IMR-90 (cell line): ENCODE measurements at regions of chrX and their contacts with region 1.

Region 1: DNA sequence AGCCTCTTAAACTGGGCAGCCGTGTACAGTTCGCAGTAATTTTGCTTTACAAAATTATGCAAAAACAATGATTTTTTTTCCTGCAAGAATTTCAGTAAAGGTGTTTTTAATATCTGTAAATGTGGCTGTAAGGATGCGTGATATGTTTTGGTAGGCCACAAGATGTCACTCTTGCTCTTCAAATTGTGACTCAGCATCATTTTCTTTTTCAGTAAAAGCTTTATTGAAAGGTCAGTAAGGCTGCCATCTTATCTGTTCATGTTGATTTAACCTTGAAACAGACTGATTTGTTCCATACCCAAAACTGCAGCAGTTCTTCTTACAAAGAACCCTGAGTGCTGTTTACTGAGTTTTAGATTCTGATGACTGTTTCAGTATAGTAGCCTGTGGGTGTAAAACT is 39.9 kb downstream of the TXLNG start:
- DNase-seq: peak; percentile 74
- ATAC-seq: peak; percentile 69; the same call in 1 of the 2 replicates
- H3K4me3 ChIP-seq: no peak overlapping the region
- H3K27ac ChIP-seq: no peak overlapping the region
- H3K4me1 ChIP-seq: peaks cover 11% of the 10 kb centered on the region
- H3K27me3 ChIP-seq: no peaks in the 10 kb centered on the region; the same call in 1 of the 2 replicates
- CTCF ChIP-seq: peak; percentile 76
- POLR2A ChIP-seq: no peak
- RAD21 ChIP-seq: peak; percentile 80

Region 2: GRCh38 chrX:16594490-16594889 is 231.7 kb before region 1 on chrX:
- CTCF ChIA-PET with region 1: no interaction called
- POLR2A ChIA-PET with region 1: no interaction called
- dilution Hi-C with region 1: no loop called
- in situ Hi-C with region 1: no loop called
- intact Hi-C with region 1: no loop called
- DNase-seq: no peak
- ATAC-seq: no peak
- H3K4me3 ChIP-seq: no peak overlapping the region
- H3K27ac ChIP-seq: no peak overlapping the region
- H3K4me1 ChIP-seq: peaks cover 2% of the 10 kb centered on the region; the same call in 1 of the 2 replicates
- H3K27me3 ChIP-seq: no peaks in the 10 kb centered on the region; the same call in 1 of the 2 replicates
- CTCF ChIP-seq: no peak
- POLR2A ChIP-seq: no peak
- RAD21 ChIP-seq: no peak

Region 3: GRCh38 chrX:16664074-16664473 is 162.1 kb before region 1 on chrX:
- CTCF ChIA-PET with region 1: no interaction called
- POLR2A ChIA-PET with region 1: no interaction called
- dilution Hi-C with region 1: no loop called
- in situ Hi-C with region 1: no loop called
- intact Hi-C with region 1: no loop called
- DNase-seq: peak; percentile 67
- ATAC-seq: peak; percentile 56
- H3K4me3 ChIP-seq: no peak overlapping the region
- H3K27ac ChIP-seq: no peak overlapping the region
- H3K4me1 ChIP-seq: peaks cover 11% of the 10 kb centered on the region
- H3K27me3 ChIP-seq: no peaks in the 10 kb centered on the region; the same call in 1 of the 2 replicates
- CTCF ChIP-seq: peak; percentile 57
- POLR2A ChIP-seq: no peak
- RAD21 ChIP-seq: peak; percentile 61

Region 4: DNA sequence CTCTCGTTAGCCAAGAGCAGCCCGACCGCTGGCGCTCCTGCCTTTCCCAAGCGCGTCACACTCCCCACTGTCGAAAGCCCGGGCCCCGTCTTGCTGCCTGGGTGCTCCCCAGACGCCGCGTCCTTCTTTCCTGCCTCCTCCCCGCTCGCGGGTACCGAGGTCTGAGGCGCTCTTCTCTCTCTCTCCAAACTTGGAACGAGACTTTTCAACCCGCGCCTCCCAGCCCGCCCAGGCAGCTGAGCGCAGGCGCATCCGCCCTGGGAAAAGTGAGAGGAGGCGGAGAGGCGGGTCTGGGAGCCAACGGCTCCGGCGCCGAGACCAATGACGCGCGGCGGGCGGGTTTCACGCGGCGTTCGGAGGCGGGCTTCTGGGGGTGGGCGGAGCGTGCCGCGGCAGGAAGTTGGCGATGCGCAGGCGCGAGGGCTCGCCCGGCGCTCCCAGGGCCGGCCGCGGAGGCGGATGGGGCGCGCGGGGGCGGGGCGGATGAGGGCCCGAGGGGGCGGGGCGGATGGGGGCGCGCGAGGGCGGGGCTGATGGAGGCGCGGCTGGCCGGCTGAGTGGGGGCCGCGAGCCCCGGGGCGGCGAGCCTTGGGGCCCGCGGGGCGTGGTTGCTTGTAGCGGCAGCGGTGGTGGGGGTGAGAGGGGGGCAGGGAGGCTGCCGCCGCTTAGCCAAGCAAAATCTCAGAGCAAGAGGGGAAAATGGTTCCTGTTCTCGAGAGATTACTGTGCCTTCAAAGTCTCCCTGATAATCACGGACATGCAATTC is 44.1 kb after region 1 on chrX and contains the start of gene RBBP7:
- CTCF ChIA-PET with region 1: interaction called, 3 read pairs
- POLR2A ChIA-PET with region 1: no interaction called
- dilution Hi-C with region 1: no loop called
- in situ Hi-C with region 1: no loop called
- intact Hi-C with region 1: loop called (anchors 5 kb)
- DNase-seq: peak; percentile 89
- ATAC-seq: peak; percentile 91
- H3K4me3 ChIP-seq: peak within 1 kb of the TSS; percentile 66
- H3K27ac ChIP-seq: peak within 1 kb of the TSS; percentile 92
- H3K4me1 ChIP-seq: peaks cover 8% of the 10 kb centered on the region
- H3K27me3 ChIP-seq: peaks cover 9% of the 10 kb centered on the region
- CTCF ChIP-seq: no peak
- POLR2A ChIP-seq: peak; percentile 94
- RAD21 ChIP-seq: no peak
- total RNA-seq, gene RBBP7: 132 and 147 TPM in 2 replicates

Region 5: DNA sequence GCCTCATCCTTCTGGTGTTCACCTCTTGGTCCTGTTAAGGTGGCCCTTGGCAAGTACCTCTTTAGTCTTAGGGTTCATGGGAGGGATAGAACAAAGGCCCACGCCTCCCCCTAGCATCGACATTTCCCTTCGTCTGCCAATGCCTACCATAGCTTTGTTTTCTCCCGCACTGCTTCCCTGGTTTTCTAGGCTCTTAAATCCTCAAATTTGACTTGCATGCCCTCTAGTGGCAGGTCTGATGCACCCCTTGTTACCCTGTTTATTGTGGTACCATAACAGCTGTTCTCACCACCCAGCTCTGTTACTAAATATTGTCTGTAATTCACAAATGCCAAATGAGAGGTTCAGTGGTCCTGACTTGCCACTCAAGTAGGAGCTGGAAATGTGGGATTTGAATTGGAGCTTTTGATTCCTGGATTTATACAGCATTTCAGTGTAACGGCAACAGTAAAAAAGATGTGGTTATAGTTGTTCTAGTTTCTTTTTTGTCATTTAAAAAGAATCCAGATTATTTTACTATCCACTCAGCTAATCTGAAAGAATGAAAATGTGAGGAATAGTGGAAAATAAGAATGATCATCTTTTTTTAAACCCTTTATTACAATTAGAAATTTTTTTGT is 220.4 kb after region 1 on chrX:
- CTCF ChIA-PET with region 1: interaction called, 18 read pairs
- POLR2A ChIA-PET with region 1: no interaction called
- dilution Hi-C with region 1: no loop called
- in situ Hi-C with region 1: loop called (anchors 10 kb)
- intact Hi-C with region 1: loop called (anchors 1 kb)
- DNase-seq: peak; percentile 67
- ATAC-seq: peak; percentile 93
- H3K4me3 ChIP-seq: no peak overlapping the region
- H3K27ac ChIP-seq: no peak overlapping the region
- H3K4me1 ChIP-seq: no peaks in the 10 kb centered on the region
- H3K27me3 ChIP-seq: peaks cover 3% of the 10 kb centered on the region
- CTCF ChIP-seq: peak; percentile 72
- POLR2A ChIP-seq: no peak
- RAD21 ChIP-seq: peak; percentile 80

Region 6: GRCh38 chrX:17237146-17237545 is 410.9 kb after region 1 on chrX:
- CTCF ChIA-PET with region 1: no interaction called
- POLR2A ChIA-PET with region 1: no interaction called
- dilution Hi-C with region 1: no loop called
- in situ Hi-C with region 1: no loop called
- intact Hi-C with region 1: loop called (anchors 5 kb)
- DNase-seq: no peak
- ATAC-seq: no peak
- H3K4me3 ChIP-seq: no peak overlapping the region
- H3K27ac ChIP-seq: no peak overlapping the region
- H3K4me1 ChIP-seq: no peaks in the 10 kb centered on the region
- H3K27me3 ChIP-seq: peaks cover 8% of the 10 kb centered on the region
- CTCF ChIP-seq: no peak
- POLR2A ChIP-seq: no peak
- RAD21 ChIP-seq: no peak

Region 7: GRCh38 chrX:17689971-17690409 is 863.8 kb after region 1 on chrX:
- CTCF ChIA-PET with region 1: no interaction called
- POLR2A ChIA-PET with region 1: no interaction called
- dilution Hi-C with region 1: no loop called
- in situ Hi-C with region 1: loop called (anchors 25 kb)
- intact Hi-C with region 1: loop called (anchors 1 kb)
- DNase-seq: peak; percentile 72
- ATAC-seq: peak; percentile 94
- H3K4me3 ChIP-seq: no peak overlapping the region
- H3K27ac ChIP-seq: no peak overlapping the region
- H3K4me1 ChIP-seq: no peaks in the 10 kb centered on the region
- H3K27me3 ChIP-seq: no peaks in the 10 kb centered on the region; the same call in 1 of the 2 replicates
- CTCF ChIP-seq: peak; percentile 80
- POLR2A ChIP-seq: no peak
- RAD21 ChIP-seq: peak; percentile 88